ENCODE measurements at regions of chr10 and their contacts with region 1.

Region 1: DNA sequence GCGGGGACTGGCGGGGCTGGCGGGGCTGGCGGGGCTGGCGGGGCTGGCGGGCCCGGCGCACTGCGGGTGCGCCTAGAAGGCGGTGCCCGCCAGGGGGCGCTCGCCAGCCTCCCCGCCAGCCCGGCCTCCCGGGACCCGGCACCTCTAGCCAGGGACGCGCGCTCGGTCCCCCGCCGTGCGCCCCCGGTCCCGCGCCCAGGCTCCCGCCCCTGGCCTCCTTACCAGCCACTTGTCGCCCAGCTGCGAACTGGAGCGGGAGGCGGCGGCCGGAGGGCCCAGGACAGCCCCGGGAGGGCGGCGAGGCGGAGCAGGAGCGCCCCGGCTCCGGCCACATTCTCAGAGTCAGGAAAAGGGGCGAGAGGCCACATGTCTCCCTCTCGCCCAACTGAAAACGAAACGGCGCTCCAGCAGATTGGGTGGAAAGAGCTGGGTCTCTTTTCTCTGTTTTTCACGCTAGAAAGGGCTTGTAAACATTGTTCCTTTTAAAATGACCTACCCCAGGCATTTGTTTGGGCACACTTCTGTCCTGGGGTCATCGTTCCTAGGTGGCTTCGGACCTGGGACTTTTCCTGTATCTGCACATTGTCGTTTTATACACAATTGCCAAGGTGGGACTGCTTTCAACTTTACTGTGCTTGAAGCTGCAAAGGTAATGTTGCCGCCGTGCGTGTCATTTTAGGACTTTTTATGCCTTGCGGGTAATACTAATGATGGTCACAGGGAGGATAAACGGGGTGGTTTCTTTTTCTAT is 378 bp upstream of the PRKCQ start:
- DNase-seq: peak; percentile 72 to 98 (median 78)

Region 2: DNA sequence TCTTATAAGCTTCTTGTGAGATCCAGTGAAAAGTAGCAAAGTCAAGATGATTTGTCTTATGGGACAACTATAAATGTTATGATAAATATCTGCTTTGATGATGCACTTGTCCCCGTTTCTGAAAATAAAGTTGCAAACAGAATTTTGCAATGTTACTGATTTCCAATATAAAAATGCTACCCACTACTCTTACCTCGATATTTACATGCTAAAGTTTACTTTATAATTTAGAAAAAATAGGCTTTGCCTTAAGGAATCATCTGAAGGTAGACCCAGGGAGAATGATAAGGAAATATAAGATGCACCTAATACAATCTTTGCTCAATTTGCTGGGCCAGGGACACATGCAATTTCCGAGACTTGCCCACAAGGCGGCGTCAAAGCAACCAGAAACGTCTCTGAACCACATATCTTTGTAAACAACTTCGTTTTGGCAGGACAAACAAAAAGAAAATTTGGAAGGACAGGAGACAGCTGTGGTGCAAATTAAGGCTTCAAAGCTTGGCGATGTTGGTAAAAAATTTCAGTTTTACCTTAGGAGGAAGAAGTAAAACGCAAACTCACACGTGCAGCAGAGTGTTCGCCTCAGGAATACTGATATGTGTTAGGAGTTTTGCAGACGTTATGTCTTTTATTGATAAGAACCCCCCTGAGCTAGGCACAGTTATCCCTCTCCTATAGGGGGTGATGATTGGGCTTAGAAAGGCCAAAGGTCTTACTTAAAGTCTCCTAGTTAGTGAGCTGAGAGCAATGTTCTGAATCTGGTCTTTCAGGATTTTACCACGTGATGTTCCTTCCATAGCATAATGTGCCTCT is 134.7 kb before region 1 on chr10:
- intact Hi-C with region 1: loop called (anchors 2 kb)
- DNase-seq: peak; percentile 36 to 95 (median 76)

Region 3: GRCh38 chr10:6647811-6648526 is 67.5 kb after region 1 on chr10:
- intact Hi-C with region 1: loop called (anchors 1 kb)
- DNase-seq: peak in 9 of 10 donors; percentile 29 to 91 (median 68)

Measured in posterior cingulate gyrus (tissue), 11 donors.